ENCODE measurements at regions of chr3 and their contacts with region 1.

Region 1: DNA sequence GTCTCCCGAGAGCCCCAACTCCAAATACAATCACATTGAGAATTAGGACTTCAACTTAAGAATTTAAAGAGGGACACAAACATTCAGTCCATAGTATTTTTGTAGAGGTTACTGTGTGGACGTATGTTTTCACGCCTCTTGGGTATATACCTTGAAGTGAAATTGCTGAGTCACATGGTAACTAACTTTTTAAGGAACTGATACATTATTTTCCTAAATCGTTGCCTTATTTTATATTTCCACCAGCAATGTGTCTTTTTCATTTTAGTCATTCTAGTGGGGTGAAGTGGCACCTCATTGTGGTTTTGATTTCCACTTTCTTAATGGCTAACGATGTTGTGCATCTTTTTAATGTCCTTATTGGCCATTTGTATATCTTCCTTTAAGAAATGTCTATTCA is 11.8 kb downstream of the PARP15 start:
- DNase-seq: peak; percentile 59
- ATAC-seq: peak; percentile 88
- H3K4me3 ChIP-seq: no peak overlapping the region
- H3K27ac ChIP-seq: no peak overlapping the region; the same call in none of the 2 replicates
- H3K4me1 ChIP-seq: peaks cover 4% of the 10 kb centered on the region; the same call in 1 of the 2 replicates
- H3K27me3 ChIP-seq: no peaks in the 10 kb centered on the region
- CTCF ChIP-seq: no peak
- EP300 ChIP-seq: peak in 1 of 2 experiments; percentile 73; a peak in 2 of 4 replicates
- POLR2A ChIP-seq: no peak
- RAD21 ChIP-seq: no peak

Region 2: GRCh38 chr3:122578069-122578740 is 11.1 kb before region 1 on chr3:
- CTCF ChIA-PET with region 1: interaction called, 3 read pairs
- POLR2A ChIA-PET with region 1: interaction called, 15 read pairs
- RAD21 ChIA-PET with region 1: interaction called, 9 read pairs
- SMC1A ChIA-PET with region 1: interaction called, 13 read pairs
- in situ Hi-C with region 1: no loop called
- intact Hi-C with region 1: no loop called
- DNase-seq: no peak
- ATAC-seq: no peak
- H3K4me3 ChIP-seq: peak overlapping the region; percentile 54
- H3K27ac ChIP-seq: peak overlapping the region; percentile 95
- H3K4me1 ChIP-seq: peaks cover 24% of the 10 kb centered on the region
- H3K27me3 ChIP-seq: no peaks in the 10 kb centered on the region
- CTCF ChIP-seq: no peak
- EP300 ChIP-seq: no peak
- POLR2A ChIP-seq: no peak
- RAD21 ChIP-seq: no peak

Measured in GM12878 (cell line).